Posterior vena cava (tissue), 2 donors: ENCODE measurements at regions of chr9 and their contacts with region 1.

Region 1: GRCh38 chr9:94938384-94938783 is 211.9 kb downstream of the AOPEP start:
- DNase-seq: no peak

Region 2: GRCh38 chr9:94829380-94830070 is 108.9 kb before region 1 on chr9:
- intact Hi-C with region 1: no loop called
- DNase-seq: no peak

Region 3: DNA sequence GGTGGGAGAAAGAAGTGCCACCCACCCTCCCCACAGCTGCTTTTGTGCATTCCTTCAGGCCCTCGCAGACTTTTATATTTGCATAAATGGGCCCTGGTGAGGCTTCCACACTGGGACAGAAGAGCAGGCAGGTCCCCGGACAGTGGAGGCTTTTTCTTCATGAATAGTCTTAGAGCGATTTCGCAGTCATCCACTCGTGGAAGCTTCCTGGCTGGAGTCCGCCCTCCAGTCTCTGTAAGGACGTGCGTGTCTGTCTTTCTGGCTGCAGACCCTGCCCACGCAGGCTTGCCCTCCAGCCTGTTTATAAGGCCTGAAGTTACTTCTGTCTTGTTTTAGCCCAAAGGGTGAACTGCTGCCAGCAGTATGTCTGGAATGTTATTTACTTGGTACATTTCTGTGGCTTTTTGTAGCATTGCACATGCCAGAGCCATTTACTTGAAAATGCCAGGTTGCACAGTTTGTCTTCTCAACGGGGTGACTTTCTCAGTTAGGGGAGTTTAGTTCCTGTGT is 16.2 kb before region 1 on chr9:
- intact Hi-C with region 1: loop called in 1 of 2 experiments (anchors 2 kb)
- DNase-seq: peak; percentile 94